ENCODE measurements at regions of chr6 and their contacts with region 1.

Region 1: DNA sequence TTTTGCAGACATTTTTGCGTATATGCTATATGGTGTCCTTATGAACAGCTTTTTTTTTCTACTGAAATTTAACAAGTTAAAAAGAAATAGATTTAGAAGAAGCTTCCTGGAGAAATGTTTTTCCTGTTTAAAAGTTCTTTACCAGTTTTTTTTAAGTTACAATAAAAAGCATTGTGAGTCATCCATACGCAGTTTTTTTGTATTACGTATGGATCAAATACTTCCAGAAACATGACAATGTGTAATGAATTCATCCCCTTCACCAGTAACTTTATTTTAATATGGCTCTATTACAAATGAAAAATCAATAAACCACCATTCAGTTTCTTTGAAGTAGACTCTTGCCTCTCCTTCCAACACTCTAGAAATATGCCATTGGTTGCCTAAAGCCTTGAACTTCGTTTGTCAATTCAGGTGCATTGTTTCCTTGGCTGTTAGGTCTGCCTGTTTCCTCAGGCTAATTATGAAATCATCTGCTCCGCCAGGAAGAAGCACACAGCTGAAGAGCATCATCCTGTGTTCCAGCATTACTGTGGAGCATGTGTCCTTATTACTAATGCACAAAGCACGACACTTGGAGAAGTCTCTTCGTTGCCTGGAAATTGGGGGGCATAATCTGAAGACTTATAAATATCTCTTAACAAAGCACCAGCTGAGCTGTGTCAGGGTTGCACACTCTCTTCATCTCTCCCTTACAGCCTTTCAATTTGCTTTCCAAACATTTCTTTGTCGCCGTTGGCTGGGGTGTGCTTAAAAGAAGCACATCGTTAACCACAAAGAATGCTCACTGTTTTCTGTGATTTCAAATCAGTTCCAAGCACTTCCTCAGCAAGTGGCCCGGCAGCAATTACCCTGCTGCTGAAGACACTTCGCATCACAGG is 9.6 kb downstream of the MOXD1 start:
- DNase-seq: peak; percentile 81
- H3K4me3 ChIP-seq: no peak overlapping the region
- H3K27ac ChIP-seq: peak overlapping the region; percentile 63
- H3K4me1 ChIP-seq: peaks cover 17% of the 10 kb centered on the region
- H3K27me3 ChIP-seq: no peaks in the 10 kb centered on the region
- CTCF ChIP-seq: no peak

Region 2: DNA sequence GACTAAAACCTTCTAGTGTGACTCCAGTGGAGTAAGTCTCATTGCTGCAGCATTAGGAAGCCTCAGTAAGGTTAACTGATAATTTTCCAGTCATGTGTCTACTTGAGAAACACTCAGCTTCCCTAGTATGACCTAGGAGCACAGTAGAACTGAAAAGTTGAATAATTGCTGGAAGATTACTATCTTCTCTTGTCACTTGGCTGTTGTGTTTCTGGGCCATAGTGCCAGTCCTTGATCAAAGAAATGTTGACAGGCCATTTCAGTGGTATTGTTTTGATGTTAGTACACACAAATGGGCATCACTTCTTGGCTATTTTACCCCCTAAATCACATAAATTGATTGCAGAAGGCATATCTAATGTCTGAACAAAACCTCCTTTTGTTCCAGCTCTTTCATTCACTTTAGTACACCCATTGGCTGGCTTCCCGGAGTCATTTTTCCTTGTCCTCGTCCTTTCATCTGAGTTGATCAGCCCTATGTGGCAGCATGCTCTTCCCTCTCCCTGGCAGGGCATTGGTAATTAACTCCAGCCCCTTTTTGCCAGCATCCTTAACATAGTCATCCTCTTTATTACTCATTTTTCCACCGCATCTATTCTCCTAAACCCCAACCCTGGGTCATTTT is 748.5 kb before region 1 on chr6:
- CTCF ChIA-PET with region 1: interaction called, 24 read pairs
- dilution Hi-C with region 1: no loop called
- in situ Hi-C with region 1: no loop called
- intact Hi-C with region 1: no loop called
- DNase-seq: no peak
- H3K4me3 ChIP-seq: no peak overlapping the region
- H3K27ac ChIP-seq: no peak overlapping the region
- H3K4me1 ChIP-seq: no peaks in the 10 kb centered on the region
- H3K27me3 ChIP-seq: no peaks in the 10 kb centered on the region
- CTCF ChIP-seq: no peak

Region 3: DNA sequence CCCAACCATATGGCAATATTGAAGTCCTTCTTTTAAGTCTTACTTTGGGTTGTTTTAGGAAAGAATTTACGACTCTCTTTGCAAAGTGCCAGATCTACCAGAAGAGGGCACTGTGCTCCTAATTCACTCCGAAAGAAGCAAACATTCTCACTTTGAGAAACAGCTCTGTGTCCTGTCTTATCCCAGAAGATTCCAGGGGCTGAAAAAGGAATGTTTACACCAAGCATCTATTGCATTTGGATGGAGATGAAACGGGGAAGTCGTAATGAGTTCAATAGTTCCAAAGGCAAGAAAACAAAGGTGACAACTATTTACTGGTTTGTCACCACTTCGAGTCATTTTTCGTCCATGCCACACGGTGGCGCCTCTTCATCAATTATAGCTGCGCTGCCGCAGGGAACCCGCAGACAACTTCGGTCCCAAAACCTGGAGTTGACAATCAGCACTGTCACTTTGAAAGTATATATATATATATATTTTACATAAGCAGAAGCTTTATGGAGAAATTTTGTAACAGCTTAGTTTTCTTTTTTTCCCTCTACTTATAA is 112.0 kb before region 1 on chr6:
- CTCF ChIA-PET with region 1: interaction called, 3 read pairs
- dilution Hi-C with region 1: no loop called
- in situ Hi-C with region 1: no loop called
- intact Hi-C with region 1: loop called (anchors 1 kb)
- DNase-seq: peak; percentile 53
- H3K4me3 ChIP-seq: peak overlapping the region; percentile 35 to 56 (median 53)
- H3K27ac ChIP-seq: no peak overlapping the region
- H3K4me1 ChIP-seq: no peaks in the 10 kb centered on the region
- H3K27me3 ChIP-seq: no peaks in the 10 kb centered on the region
- CTCF ChIP-seq: peak; percentile 76 to 81

Region 4: GRCh38 chr6:132300323-132300949 is 91.2 kb before region 1 on chr6:
- CTCF ChIA-PET with region 1: no interaction called
- dilution Hi-C with region 1: no loop called
- in situ Hi-C with region 1: loop called in 1 of 2 experiments (anchors 10 kb)
- intact Hi-C with region 1: loop called (anchors 1 kb)
- DNase-seq: peak; percentile 39
- H3K4me3 ChIP-seq: no peak overlapping the region
- H3K27ac ChIP-seq: no peak overlapping the region
- H3K4me1 ChIP-seq: no peaks in the 10 kb centered on the region
- H3K27me3 ChIP-seq: no peaks in the 10 kb centered on the region
- CTCF ChIP-seq: peak; percentile 55 to 72

Region 5: GRCh38 chr6:132333639-132334520 is 57.8 kb before region 1 on chr6:
- CTCF ChIA-PET with region 1: no interaction called
- dilution Hi-C with region 1: no loop called
- in situ Hi-C with region 1: no loop called
- intact Hi-C with region 1: loop called (anchors 2 kb)
- DNase-seq: peak; percentile 87
- H3K4me3 ChIP-seq: no peak overlapping the region
- H3K27ac ChIP-seq: peak overlapping the region; percentile 8
- H3K4me1 ChIP-seq: peaks cover 24% of the 10 kb centered on the region
- H3K27me3 ChIP-seq: no peaks in the 10 kb centered on the region
- CTCF ChIP-seq: no peak

Region 6: DNA sequence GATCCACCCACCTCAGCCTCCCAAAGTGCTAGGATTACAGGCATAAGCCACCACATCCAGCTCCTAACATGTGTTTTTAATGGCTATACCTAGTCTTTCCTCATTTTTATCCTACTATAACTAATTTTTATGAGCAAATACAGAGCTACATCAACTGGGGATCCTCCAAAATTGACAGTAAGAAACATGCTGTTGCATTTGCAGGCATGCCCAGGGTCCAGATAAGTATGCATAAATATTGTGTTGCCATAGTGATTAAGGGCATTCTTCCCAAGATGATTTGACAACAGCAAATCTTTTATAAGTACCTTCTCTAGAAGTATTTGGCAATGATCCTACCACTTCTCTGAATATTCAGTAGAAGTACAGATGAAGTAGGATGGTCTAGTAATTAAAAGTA is 51.6 kb after region 1 on chr6:
- CTCF ChIA-PET with region 1: no interaction called
- dilution Hi-C with region 1: loop called (anchors 5 kb)
- in situ Hi-C with region 1: no loop called
- intact Hi-C with region 1: no loop called
- DNase-seq: peak; percentile 26
- H3K4me3 ChIP-seq: no peak overlapping the region
- H3K27ac ChIP-seq: no peak overlapping the region
- H3K4me1 ChIP-seq: peaks cover 14% of the 10 kb centered on the region
- H3K27me3 ChIP-seq: no peaks in the 10 kb centered on the region
- CTCF ChIP-seq: no peak

Region 7: DNA sequence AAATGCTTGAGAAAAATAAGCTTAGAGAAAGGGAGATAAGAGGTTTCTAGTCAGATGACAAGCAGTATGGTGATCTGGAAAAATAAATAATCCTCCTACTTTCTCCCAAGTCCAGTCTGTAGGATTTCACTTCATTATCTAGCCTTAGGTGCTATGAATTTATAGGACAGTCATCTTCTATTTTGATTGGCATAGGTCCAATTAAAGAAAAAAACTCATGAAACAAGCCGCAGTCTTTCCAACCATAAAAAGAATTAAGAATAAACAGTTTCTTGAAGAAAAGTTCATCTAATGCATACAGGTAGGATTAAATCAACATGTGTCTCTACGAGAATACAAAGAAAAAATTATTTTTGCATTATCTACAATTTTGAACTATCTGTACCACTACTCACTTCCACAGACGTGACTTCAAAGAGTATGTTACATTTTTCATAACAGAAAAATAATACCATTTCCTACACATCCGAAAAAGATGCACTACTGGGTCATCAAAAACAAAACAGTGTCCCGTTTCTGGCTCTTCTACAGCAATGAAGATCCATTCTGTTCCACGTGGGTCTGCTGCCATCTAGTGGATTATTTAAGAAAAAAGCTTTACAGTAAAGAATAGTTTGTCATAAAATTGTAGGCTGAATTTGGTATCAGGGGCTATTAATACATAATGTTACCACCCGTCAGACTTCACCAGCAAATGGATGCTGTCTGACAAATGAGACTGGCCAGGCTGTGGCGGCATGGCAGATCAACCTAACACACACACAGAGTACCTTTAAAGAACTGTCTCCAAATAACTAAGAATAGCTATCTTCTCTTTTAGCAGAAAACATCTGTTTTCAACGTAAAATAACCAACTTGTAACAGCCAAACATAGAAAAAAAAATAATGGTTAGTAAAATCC is 92.4 kb after region 1 on chr6:
- CTCF ChIA-PET with region 1: no interaction called
- dilution Hi-C with region 1: no loop called
- in situ Hi-C with region 1: loop called in 1 of 2 experiments (anchors 5 kb)
- intact Hi-C with region 1: loop called (anchors 1 kb)
- DNase-seq: peak; percentile 39
- H3K4me3 ChIP-seq: no peak overlapping the region
- H3K27ac ChIP-seq: no peak overlapping the region
- H3K4me1 ChIP-seq: peaks cover 6% of the 10 kb centered on the region
- H3K27me3 ChIP-seq: no peaks in the 10 kb centered on the region
- CTCF ChIP-seq: peak; percentile 63 to 68

Region 8: GRCh38 chr6:132537145-132537544 is 145.5 kb after region 1 on chr6:
- CTCF ChIA-PET with region 1: no interaction called
- dilution Hi-C with region 1: no loop called
- in situ Hi-C with region 1: no loop called
- intact Hi-C with region 1: no loop called
- DNase-seq: no peak
- H3K4me3 ChIP-seq: no peak overlapping the region
- H3K27ac ChIP-seq: no peak overlapping the region
- H3K4me1 ChIP-seq: no peaks in the 10 kb centered on the region
- H3K27me3 ChIP-seq: peaks cover 13% of the 10 kb centered on the region
- CTCF ChIP-seq: no peak

Measured in mammary epithelial cell (primary cell).